ENCODE measurements at regions of chr10 and their contacts with region 1.

Region 1: DNA sequence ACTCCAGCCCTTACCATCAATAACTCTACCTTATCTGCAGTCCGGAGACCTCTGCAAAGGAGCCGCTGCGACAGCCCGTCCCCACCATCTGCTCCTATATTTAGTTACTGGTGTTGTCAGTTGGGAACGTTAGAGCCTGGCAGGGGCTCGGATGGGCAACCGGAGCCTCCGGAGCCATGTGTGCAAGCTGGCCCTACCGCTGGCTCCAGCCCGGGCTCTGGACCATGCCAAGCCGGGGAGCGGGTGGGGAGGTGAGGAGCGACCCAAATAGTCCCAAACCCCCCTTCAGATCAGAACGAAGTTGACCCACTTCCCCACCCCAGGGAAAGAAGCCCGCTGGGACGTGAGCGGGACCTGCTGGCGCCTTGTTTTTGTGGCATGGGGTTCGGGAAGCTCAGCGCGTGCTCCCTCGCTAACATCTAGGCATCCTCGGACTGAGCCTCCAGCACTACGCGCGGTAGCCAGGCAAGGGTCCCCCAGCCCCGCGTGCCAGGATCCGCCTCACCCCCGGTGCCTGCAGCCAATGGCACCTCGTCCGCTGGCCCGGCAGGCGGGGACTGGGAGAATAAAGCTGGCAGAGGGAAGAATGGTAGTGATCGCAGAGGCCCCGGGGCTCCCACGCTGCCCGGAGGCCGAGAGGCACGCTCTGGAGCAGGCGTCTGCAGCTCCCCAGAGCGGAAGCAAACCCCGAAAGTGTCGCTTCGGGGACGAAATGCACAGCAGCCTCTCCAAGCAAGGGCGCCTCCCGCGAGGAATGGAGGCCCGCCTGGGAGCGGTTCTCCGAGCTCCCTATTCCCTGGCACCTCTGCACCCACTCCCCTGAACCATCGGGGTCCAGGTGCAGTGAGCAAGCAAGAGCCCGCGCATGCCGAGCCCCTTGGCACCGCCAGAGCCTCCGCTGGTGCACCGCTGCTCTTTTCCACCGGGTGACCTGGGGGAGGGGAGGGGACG is 679 bp downstream of the LRRC20 start:
- DNase-seq: peak; percentile 61
- ATAC-seq: peak; percentile 47
- H3K4me3 Mint-ChIP-seq: peak overlapping the region; percentile 81
- H3K27ac Mint-ChIP-seq: peak overlapping the region; percentile 33
- H3K4me1 Mint-ChIP-seq: peaks cover 6% of the 10 kb centered on the region
- H3K27me3 Mint-ChIP-seq: peaks cover 3% of the 10 kb centered on the region

Region 2: GRCh38 chr10:70221030-70221429 is 160.7 kb before region 1 on chr10:
- CTCF ChIA-PET with region 1: interaction called, 27 read pairs
- POLR2A ChIA-PET with region 1: no interaction called
- intact Hi-C with region 1: loop called in 1 of 2 experiments (anchors 1 kb)
- DNase-seq: no peak
- ATAC-seq: no peak
- H3K4me3 Mint-ChIP-seq: no peak overlapping the region
- H3K27ac Mint-ChIP-seq: no peak overlapping the region
- H3K4me1 Mint-ChIP-seq: peaks cover 36% of the 10 kb centered on the region
- H3K27me3 Mint-ChIP-seq: no peaks in the 10 kb centered on the region

Region 3: DNA sequence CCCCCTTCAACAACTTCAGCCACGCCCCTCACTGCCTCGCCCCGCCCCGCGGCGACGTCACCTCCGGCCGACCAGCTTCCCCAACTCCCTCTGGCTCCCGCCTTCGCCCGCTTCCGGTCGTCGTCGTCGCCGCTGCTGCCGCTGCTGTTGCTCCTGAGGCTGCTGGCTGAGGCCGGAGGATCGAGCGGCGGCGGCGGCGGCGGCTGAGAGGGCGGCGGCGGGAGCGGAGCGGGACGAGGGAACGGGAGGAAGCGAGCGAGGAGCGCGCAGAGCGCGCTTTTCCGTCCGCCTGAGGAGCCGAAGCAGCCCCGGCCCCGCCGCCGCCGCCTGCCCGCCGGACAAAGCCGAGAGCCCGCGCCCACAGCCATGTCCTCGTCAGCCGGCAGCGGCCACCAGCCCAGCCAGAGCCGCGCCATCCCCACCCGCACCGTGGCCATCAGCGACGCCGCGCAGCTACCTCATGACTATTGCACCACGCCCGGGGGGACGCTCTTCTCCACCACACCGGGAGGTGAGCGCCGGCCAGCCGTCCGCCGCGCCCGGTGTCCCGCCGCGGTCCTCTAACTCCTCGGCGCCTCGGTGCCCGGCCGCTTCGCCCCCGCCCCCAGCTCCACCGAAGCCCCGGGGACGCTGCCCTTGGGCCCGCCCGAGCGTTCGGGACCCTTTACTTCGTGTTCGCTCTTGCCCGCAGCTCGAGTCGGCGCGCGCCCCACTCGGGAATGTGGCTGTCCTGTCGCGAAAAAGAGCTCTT is 22.5 kb after region 1 on chr10 and contains the start of gene EIF4EBP2:
- CTCF ChIA-PET with region 1: interaction called, 10 read pairs
- POLR2A ChIA-PET with region 1: no interaction called
- intact Hi-C with region 1: loop called (anchors 1 kb)
- DNase-seq: peak; percentile 99
- ATAC-seq: peak; percentile 91
- H3K4me3 Mint-ChIP-seq: peak within 1 kb of the TSS; percentile 94
- H3K27ac Mint-ChIP-seq: peak within 1 kb of the TSS; percentile 91
- H3K4me1 Mint-ChIP-seq: peaks cover 37% of the 10 kb centered on the region
- H3K27me3 Mint-ChIP-seq: no peaks in the 10 kb centered on the region
- total RNA-seq, gene EIF4EBP2: 24.4 to 27.7 TPM

Region 4: GRCh38 chr10:70461215-70461986 is 79.7 kb after region 1 on chr10:
- CTCF ChIA-PET with region 1: no interaction called
- POLR2A ChIA-PET with region 1: no interaction called
- intact Hi-C with region 1: loop called in 1 of 2 experiments (anchors 5 kb)
- DNase-seq: peak; percentile 73
- ATAC-seq: peak; percentile 80
- H3K4me3 Mint-ChIP-seq: no peak overlapping the region
- H3K27ac Mint-ChIP-seq: no peak overlapping the region
- H3K4me1 Mint-ChIP-seq: peaks cover 9% of the 10 kb centered on the region
- H3K27me3 Mint-ChIP-seq: peaks cover 28% of the 10 kb centered on the region

Region 5: GRCh38 chr10:70478191-70479164 is 96.7 kb after region 1 on chr10 and contains the start of gene PALD1:
- CTCF ChIA-PET with region 1: no interaction called
- POLR2A ChIA-PET with region 1: no interaction called
- intact Hi-C with region 1: loop called in 1 of 2 experiments (anchors 1 kb)
- DNase-seq: peak; percentile 76
- ATAC-seq: peak; percentile 45
- H3K4me3 Mint-ChIP-seq: peak within 1 kb of the TSS; percentile 70
- H3K27ac Mint-ChIP-seq: peak within 1 kb of the TSS; percentile 67
- H3K4me1 Mint-ChIP-seq: peaks cover 41% of the 10 kb centered on the region
- H3K27me3 Mint-ChIP-seq: peaks cover 19% of the 10 kb centered on the region
- total RNA-seq, gene PALD1: 5.4 to 6.7 TPM

Region 6: DNA sequence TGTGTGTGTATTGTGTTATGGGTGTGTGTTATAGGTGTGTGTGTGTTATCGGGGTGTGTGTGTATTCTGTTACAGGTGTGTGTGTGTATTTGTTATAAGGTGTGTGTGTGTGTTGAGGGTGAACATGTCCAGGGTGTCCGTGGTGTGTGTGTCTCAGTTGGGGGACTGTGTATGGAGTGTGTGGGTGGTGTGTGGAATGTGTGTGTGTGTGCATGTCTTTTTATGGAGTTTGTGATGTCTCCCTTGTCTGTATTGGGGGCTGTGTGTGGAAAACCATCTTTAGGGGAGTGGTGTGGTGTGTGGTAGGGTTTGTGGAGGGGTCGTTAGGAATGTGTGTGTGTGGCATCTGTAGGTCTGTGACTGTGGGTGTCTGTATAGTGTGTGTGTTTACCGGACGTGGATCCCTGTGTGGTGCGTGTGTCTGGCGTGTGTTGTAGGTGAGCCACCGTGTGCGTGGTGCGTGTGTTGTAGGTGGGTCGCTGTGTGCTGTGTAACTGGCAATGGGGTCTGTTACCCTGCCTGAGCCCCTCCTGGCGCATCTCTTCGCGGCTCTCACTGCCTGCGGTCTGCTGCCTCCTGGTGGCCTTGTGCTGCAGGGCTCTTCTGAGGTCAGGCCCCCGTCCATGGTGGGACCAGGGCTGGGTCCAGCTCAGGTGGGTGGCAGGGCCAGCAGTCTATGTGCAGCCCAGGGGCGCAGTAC is 158.5 kb after region 1 on chr10:
- CTCF ChIA-PET with region 1: no interaction called
- POLR2A ChIA-PET with region 1: no interaction called
- intact Hi-C with region 1: loop called in 1 of 2 experiments (anchors 1 kb)
- DNase-seq: peak; percentile 50
- ATAC-seq: peak; percentile 47
- H3K4me3 Mint-ChIP-seq: no peak overlapping the region
- H3K27ac Mint-ChIP-seq: no peak overlapping the region
- H3K4me1 Mint-ChIP-seq: no peaks in the 10 kb centered on the region
- H3K27me3 Mint-ChIP-seq: no peaks in the 10 kb centered on the region